ENCODE measurements at regions of chr6 and their contacts with region 1.

Region 1: DNA sequence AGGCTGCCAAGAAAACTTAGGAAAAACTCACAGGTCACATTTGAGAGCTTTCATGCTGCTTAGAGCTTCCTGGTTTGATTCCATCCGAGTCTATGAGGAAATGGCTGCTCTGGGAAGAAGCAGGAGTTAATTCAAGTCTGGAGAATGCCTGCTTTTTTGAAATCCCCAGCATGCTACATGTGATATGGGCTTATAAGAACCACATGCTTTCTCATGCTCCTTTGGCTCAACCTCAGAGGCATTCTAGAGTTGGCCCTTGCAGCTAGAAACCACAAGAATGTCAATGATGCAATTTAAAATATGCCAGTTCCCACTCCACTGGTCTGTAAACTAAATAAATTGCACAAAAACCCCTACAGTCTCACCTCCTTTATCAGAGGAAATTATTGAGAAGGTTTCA is 142.9 kb upstream of the OLIG3 start:
- DNase-seq: peak in 2 of 4 donors; percentile 13 to 40
- ATAC-seq: peak; percentile 21
- H3K4me3 ChIP-seq: no peak overlapping the region
- H3K27ac ChIP-seq: no peak overlapping the region
- H3K4me1 ChIP-seq: peaks cover 4% of the 10 kb centered on the region
- H3K27me3 ChIP-seq: no peaks in the 10 kb centered on the region
- CTCF ChIP-seq: no peak
- POLR2A ChIP-seq: no peak

Region 2: DNA sequence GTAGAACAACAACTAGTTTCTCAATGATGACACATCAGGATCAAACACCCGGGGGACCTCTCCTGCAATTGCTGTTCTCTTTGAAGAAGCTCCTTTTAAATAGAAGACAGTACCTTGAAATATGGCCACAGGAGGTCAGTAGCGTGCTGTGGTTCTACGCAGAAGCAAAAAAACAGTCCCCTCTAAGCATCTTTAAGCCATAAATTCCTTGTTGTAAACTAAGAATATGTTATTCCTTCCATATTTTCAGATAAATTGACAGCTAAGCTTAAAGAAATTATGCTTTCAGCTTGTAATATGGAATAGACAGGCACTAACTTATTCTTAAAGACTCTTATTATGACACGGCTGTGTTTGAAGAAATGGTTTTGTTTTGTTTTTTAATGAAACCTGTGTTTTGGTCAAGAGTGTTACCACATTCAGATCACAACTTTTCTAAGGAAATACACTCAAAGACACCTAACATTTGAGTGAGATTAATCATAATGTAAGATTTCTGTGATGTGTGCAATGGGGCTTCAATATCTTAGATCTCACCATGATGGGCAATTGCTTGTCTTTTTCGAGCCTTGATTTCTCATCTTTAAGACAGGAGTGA is 542.6 kb before region 1 on chr6:
- intact Hi-C with region 1: loop called (anchors 10 kb)
- DNase-seq: peak; percentile 56 to 73 (median 61)
- ATAC-seq: peak; percentile 63
- H3K4me3 ChIP-seq: no peak overlapping the region
- H3K27ac ChIP-seq: no peak overlapping the region
- H3K4me1 ChIP-seq: no peaks in the 10 kb centered on the region
- H3K27me3 ChIP-seq: no peaks in the 10 kb centered on the region
- CTCF ChIP-seq: peak; percentile 55 to 81 (median 77)
- POLR2A ChIP-seq: no peak

Region 3: GRCh38 chr6:137261393-137262160 is 375.5 kb before region 1 on chr6:
- intact Hi-C with region 1: loop called (anchors 10 kb)
- DNase-seq: no peak
- ATAC-seq: peak; percentile 77
- H3K4me3 ChIP-seq: no peak overlapping the region
- H3K27ac ChIP-seq: peak overlapping the region in 2 of 4 donors; percentile 56 to 59
- H3K4me1 ChIP-seq: peaks cover 22% of the 10 kb centered on the region
- H3K27me3 ChIP-seq: no peaks in the 10 kb centered on the region
- CTCF ChIP-seq: no peak
- POLR2A ChIP-seq: no peak

Region 4: DNA sequence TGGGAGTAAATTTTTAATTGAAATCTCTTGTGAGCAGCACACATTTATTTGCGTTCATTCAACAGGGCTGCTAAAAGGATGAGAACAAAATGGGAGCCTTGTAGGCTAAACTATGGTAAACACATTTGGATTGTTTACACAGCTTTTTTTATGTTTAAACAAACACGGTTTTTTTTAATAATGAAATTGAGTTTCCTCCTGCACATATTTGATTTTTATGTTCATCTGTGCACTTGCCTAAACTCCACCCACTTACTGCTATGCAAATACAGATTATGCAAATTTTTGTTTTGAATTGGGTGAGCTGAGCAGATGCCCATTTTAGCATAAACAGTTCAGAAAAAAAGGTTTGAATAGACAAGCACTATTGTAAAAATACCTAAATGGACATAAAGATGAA is 234.9 kb before region 1 on chr6:
- intact Hi-C with region 1: no loop called
- DNase-seq: no peak
- ATAC-seq: no peak
- H3K4me3 ChIP-seq: no peak overlapping the region
- H3K27ac ChIP-seq: no peak overlapping the region
- H3K4me1 ChIP-seq: peaks cover 9% of the 10 kb centered on the region
- H3K27me3 ChIP-seq: no peaks in the 10 kb centered on the region
- CTCF ChIP-seq: no peak
- POLR2A ChIP-seq: no peak

Region 5: GRCh38 chr6:137799950-137800568 is 162.9 kb after region 1 on chr6:
- intact Hi-C with region 1: no loop called
- DNase-seq: peak; percentile 33 to 75 (median 42)
- ATAC-seq: no peak
- H3K4me3 ChIP-seq: no peak overlapping the region
- H3K27ac ChIP-seq: no peak overlapping the region
- H3K4me1 ChIP-seq: peaks cover 4% of the 10 kb centered on the region
- H3K27me3 ChIP-seq: no peaks in the 10 kb centered on the region
- CTCF ChIP-seq: peak in 6 of 7 experiments; percentile 30 to 61 (median 42)
- POLR2A ChIP-seq: no peak

Region 6: DNA sequence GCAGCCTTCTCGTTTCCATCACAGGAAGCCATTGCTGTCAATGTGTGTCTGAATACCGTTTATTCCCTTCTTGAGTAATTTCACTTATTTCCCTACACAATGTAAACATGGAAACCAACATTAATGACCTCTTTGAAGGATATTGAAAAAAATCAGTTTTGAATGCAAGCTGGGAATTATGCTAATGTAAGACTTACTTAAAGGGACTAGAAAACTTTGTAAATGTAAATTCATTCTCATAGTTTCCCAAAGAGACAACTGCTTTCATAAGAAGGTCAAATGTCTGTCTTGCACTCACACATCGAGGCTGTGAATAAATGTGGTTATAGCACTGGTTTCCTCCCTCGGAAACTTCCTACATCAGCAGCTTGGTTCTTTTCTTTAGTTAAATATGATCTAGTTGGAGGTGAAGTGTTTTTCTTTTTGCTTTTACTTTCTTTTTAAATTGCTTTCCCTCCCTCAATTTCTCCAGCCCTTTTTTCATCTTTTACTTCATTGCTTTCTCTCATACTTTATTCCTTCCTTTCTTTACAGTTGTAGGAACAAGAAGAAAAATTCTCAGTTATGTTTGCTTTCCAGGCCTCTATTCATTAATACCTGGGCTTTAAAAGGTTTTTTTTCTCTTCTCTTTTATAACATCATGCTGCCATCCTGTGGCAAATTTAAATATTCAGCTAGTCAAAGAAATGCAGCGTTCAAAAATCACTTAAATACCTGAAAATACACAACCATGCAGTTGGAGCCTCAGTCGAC is 338.2 kb after region 1 on chr6:
- intact Hi-C with region 1: no loop called
- DNase-seq: no peak
- ATAC-seq: no peak
- H3K4me3 ChIP-seq: no peak overlapping the region
- H3K27ac ChIP-seq: no peak overlapping the region
- H3K4me1 ChIP-seq: no peaks in the 10 kb centered on the region
- H3K27me3 ChIP-seq: no peaks in the 10 kb centered on the region
- CTCF ChIP-seq: peak in 5 of 7 experiments; percentile 17 to 42 (median 36)
- POLR2A ChIP-seq: no peak

Measured in body of pancreas (tissue), 4 donors.